ENCODE measurements at regions of chr1 and their contacts with region 1.

Region 1: GRCh38 chr1:1307908-1308755 is at the starts of genes ACAP3 and PUSL1:
- DNase-seq: peak; percentile 63 to 92
- H3K4me3 ChIP-seq: peak within 1 kb of the TSS; percentile 94 to 99
- H3K27ac ChIP-seq: peak within 1 kb of the TSS; percentile 95
- H3K4me1 ChIP-seq: peaks cover 25 to 40% of the 10 kb centered on the region in 2 donors
- H3K27me3 ChIP-seq: no peaks in the 10 kb centered on the region
- CTCF ChIP-seq: peak in 1 of 3 experiments; percentile 4
- total RNA-seq, gene ACAP3: 105 TPM
- total RNA-seq, gene PUSL1: 28.3 TPM

Region 2: DNA sequence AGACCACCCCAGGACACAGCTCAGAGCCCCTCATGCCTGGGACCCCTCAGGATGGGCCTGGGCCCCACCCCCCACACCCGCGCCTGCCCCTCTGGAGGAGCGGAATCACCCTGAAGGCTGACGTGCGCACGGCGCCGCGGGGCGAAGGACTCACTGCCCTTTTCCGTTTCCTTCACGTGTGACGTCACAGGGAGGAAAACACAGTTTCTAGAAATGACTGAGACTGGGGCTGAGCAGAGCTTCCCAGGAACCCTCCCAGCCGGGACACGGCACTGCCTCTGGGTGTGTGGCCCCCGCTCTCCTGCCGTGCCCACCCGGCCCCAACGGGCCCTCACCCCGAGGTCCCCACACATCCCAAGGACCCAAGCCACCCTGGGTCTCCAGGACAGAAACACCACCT is 88.8 kb before region 1 on chr1:
- intact Hi-C with region 1: no loop called
- DNase-seq: no peak
- H3K4me3 ChIP-seq: no peak overlapping the region
- H3K27ac ChIP-seq: no peak overlapping the region
- H3K4me1 ChIP-seq: no peaks in the 10 kb centered on the region
- H3K27me3 ChIP-seq: no peaks in the 10 kb centered on the region
- CTCF ChIP-seq: no peak

Region 3: GRCh38 chr1:1231400-1232223 is 76.5 kb before region 1 on chr1 and contains the start of gene SDF4:
- intact Hi-C with region 1: loop called (anchors 5 kb)
- DNase-seq: peak; percentile 77 to 98
- H3K4me3 ChIP-seq: peak within 1 kb of the TSS; percentile 91 to 95
- H3K27ac ChIP-seq: peak within 1 kb of the TSS; percentile 89 to 94
- H3K4me1 ChIP-seq: peaks cover 23% of the 10 kb centered on the region in 2 donors
- H3K27me3 ChIP-seq: no peaks in the 10 kb centered on the region
- CTCF ChIP-seq: no peak
- total RNA-seq, gene SDF4: 223 TPM

Region 4: GRCh38 chr1:1273512-1274298 is 34.4 kb before region 1 on chr1 and contains the start of gene UBE2J2:
- intact Hi-C with region 1: loop called (anchors 2 kb)
- DNase-seq: peak; percentile 79 to 97
- H3K4me3 ChIP-seq: peak within 1 kb of the TSS; percentile 97 to 98
- H3K27ac ChIP-seq: peak within 1 kb of the TSS; percentile 67 to 76
- H3K4me1 ChIP-seq: peaks cover 29 to 39% of the 10 kb centered on the region in 2 donors
- H3K27me3 ChIP-seq: no peaks in the 10 kb centered on the region
- CTCF ChIP-seq: peak in 1 of 3 experiments; percentile 12
- total RNA-seq, gene UBE2J2: 25.2 TPM

Region 5: DNA sequence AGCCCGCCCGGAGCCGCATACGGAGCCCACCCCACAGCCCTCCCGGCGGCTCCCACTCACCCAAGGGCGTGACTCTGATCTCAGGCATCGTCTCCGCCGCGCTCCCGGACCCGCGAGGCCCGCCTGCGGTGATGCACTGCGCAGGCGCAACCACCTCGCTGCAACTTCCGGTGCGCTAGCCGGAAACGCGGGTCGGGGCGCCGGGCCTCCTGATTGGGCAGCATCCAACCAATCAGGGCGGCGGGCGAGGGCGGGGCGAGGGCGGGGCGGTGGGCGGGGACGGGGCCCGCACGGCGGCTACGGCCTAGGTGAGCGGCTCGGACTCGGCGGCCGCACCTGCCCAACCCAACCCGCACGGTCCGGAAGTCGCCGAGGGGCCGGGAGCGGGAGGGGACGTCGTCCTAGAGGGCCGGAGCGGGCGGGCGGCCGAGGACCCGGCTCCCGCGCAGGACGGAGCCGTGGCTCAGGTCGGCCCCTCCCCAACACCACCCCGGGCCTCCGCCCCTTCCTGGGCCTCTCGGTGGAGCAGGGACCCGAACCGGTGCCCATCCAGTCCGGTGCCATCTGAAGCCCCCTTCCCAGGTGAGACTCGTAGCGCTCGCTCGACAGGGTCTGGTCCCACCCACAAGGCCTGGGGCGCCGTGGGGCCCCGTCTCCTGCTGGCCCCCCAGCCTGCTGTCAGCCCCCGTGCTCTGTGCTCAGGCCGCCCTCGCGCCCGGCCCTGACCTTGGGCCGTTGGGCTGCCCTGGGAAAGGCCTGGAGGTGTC is 16.6 kb after region 1 on chr1 and contains the starts of genes CPTP and INTS11:
- intact Hi-C with region 1: loop called (anchors 2 kb)
- DNase-seq: peak; percentile 68 to 96
- H3K4me3 ChIP-seq: peak within 1 kb of the TSS; percentile 70 to 89
- H3K27ac ChIP-seq: peak within 1 kb of the TSS; percentile 72 to 76
- H3K4me1 ChIP-seq: peaks cover 8 to 33% of the 10 kb centered on the region in 2 donors
- H3K27me3 ChIP-seq: no peaks in the 10 kb centered on the region
- CTCF ChIP-seq: no peak
- total RNA-seq, gene CPTP: 71.3 TPM
- total RNA-seq, gene INTS11: 214 TPM

Region 6: DNA sequence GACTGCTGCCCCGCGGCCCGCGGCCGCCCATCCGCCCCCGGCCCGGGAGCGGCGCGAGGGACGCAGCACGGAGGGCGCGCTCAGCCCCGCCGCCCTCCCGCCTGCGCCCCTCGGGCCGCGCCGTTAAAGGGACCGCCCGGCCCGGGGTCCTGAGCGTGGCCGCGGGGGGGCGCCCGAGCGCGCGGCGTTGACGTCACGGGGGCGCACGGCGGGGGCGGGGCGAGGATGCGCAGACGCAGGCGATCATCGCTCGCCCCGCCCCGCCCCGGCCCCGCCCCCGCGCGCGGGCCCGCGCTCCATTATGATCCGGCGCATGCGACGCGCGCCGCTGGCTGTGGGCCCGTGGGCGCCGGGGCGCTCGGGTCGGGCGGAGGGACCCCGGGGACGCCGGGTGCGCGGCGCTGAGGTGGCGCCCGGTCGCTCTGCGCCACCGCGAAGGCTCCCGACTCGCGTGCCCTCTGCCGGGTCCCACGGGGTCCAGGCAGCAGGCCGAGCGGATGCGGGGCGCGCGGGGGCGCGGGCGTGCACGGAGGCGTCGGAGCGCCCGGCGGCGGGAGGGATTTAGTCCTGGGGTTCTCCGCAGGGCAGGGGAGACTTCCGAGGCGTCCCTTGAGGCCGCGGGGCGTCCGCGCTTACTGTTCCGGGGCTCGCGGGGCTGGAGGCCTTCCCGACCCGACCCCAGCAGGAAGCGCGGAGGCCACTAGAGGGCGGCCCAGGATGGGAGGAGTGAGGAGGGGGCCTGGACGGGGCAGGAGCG is 41.3 kb after region 1 on chr1 and contains the start of gene DVL1:
- intact Hi-C with region 1: loop called (anchors 2 kb)
- DNase-seq: peak in 1 of 2 donors; percentile 83
- H3K4me3 ChIP-seq: peak within 1 kb of the TSS; percentile 91 to 93
- H3K27ac ChIP-seq: peak within 1 kb of the TSS; percentile 69 to 79
- H3K4me1 ChIP-seq: peaks cover 7 to 54% of the 10 kb centered on the region in 2 donors
- H3K27me3 ChIP-seq: no peaks in the 10 kb centered on the region
- CTCF ChIP-seq: peak; percentile 52 to 75 (median 68)
- total RNA-seq, gene DVL1: 66.7 TPM

Region 7: GRCh38 chr1:1615256-1616044 is 307.3 kb after region 1 on chr1 and contains the start of gene MIB2:
- intact Hi-C with region 1: loop called (anchors 1 kb)
- DNase-seq: peak; percentile 74 to 97
- H3K4me3 ChIP-seq: peak within 1 kb of the TSS; percentile 97 to 100
- H3K27ac ChIP-seq: peak within 1 kb of the TSS; percentile 100
- H3K4me1 ChIP-seq: peaks cover 15 to 25% of the 10 kb centered on the region in 2 donors
- H3K27me3 ChIP-seq: no peaks in the 10 kb centered on the region
- CTCF ChIP-seq: peak in 1 of 3 experiments; percentile 18
- total RNA-seq, gene MIB2: 96.9 TPM

Measured in ascending aorta (tissue), 2 donors.